ENCODE measurements at regions of chrX and their contacts with region 1.

Region 1: DNA sequence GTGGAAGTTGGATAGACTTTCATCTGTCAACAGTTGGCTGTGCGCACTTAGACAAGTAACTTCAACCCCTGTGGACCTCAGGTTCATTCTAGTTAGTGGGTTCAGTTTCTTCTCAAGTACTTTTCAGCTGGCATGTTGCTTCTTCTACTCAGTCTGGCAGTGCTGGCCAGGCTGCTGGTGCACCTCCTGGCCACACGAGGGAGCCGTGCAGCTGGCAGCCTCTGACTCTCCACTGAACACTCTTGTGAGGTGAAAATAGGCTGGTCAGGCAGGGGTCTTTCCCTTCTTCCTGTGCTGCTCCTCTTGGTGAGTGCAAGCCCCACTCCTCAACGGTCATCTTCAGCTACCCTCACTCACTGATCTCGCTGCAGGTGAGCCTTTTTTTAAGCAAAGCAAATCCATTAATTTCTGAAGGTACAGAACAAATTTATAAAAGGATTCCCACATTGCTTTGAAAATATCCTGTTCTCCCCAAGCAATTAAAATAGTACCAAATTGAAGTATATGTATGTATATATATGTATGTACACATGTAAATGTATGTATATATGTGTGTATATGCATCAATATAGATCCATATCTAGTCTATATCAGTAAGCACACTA is 30.6 kb downstream of the LONRF3 start:
- DNase-seq: peak; percentile 55 to 81
- ATAC-seq: peak; percentile 75
- H3K4me3 ChIP-seq: no peak overlapping the region
- H3K27ac ChIP-seq: no peak overlapping the region
- H3K4me1 ChIP-seq: no peaks in the 10 kb centered on the region
- H3K27me3 ChIP-seq: no peaks in the 10 kb centered on the region

Region 2: DNA sequence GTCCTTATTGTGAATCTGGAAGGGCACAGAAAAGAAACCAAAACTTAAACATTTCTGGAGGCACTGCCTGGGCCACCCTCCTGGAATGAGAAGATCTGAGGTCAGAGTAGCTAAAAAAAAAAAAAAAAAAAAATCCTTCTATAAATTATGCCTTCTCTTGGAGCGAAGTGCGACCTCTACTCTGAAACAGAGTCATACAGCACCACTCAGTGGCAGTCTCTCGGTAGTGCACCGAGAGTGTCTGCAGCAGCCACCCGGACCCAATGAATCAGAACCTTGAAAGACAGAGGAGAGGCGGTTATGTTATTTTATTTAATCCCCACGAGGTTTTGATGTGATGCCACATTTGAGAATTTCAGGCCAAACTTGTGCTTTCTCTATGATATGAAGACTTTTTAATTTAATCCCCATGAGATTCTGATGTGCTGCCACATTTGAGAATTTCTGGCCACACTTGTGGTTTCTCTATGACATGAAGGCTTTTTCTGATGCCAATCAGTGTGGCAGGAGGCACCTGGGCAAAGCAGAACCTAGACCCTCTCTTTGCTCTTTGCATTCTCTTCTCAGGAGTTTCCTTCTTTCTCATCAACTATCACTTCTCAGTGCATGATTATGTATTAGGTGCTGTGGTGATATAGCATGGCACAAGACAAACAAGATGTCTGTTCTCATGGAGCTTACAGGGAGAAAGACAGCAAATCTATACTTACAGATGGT is 62.2 kb after region 1 on chrX:
- intact Hi-C with region 1: loop called (anchors 2 to 5 kb)
- DNase-seq: peak; percentile 66 to 84
- ATAC-seq: peak; percentile 75
- H3K4me3 ChIP-seq: no peak overlapping the region
- H3K27ac ChIP-seq: no peak overlapping the region
- H3K4me1 ChIP-seq: no peaks in the 10 kb centered on the region
- H3K27me3 ChIP-seq: no peaks in the 10 kb centered on the region

Region 3: GRCh38 chrX:119235872-119236622 is 231.0 kb after region 1 on chrX and contains the start of gene PGRMC1:
- intact Hi-C with region 1: no loop called
- DNase-seq: peak; percentile 87 to 91
- ATAC-seq: peak; percentile 95
- H3K4me3 ChIP-seq: peak within 1 kb of the TSS; percentile 43 to 63
- H3K27ac ChIP-seq: peak within 1 kb of the TSS; percentile 53 to 83
- H3K4me1 ChIP-seq: peaks cover 0 to 5% of the 10 kb centered on the region in 2 donors
- H3K27me3 ChIP-seq: no peaks in the 10 kb centered on the region
- total RNA-seq, gene PGRMC1: 79.0 to 92.8 TPM

Measured in aorta (tissue), 5 donors.